Activated CD8-positive, alpha-beta T cell treated with anti-CD3 and anti-CD28 coated beads for 36 hours (primary cell): ENCODE measurements at regions of chr5 and their contacts with region 1.

Region 1: GRCh38 chr5:141412854-141413539 is at the start of gene PCDHGA10:
- DNase-seq: peak; percentile 75
- ATAC-seq: peak; percentile 78
- H3K4me3 Mint-ChIP-seq: peak within 1 kb of the TSS; percentile 73
- H3K27ac Mint-ChIP-seq: no peak within 1 kb of the TSS
- H3K4me1 Mint-ChIP-seq: peaks cover 13% of the 10 kb centered on the region
- H3K27me3 Mint-ChIP-seq: peaks cover 69% of the 10 kb centered on the region
- CTCF ChIP-seq: peak; percentile 79
- total RNA-seq, gene PCDHGA10: not detected

Region 2: DNA sequence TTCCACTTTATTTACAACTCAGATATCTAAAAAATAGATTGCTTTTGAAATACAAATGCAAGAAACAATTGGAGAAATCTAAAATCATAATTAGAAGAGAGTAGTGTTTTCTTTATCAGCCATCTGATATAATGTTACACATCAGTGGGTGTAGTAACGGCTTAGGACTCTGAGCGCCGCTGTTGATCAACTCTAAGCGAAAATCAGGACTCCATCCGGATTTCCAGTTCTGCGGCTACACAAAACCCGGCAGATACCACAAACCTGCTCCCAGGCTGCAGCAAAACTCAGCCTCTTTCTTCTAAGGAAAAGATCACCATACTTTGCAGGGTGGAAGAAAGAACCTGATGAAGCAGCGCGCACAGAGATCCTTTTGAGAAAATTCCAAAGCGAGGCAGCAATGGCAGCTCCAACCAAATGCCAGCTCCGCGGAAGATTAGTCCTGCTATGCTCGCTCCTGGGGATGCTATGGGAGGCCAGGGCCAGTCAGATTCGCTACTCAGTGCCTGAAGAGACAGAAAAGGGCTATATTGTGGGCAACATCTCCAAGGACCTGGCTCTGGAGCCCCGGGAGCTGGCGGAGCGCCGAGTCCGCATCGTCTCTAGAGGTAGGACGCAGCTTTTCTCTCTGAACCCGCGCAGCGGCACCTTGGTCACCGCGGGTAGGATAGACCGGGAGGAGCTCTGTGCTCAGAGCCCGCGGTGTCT is 10.3 kb before region 1 on chr5 and contains the start of gene PCDHGA9:
- CTCF ChIA-PET with region 1: interaction called, 19 read pairs
- POLR2A ChIA-PET with region 1: no interaction called
- intact Hi-C with region 1: no loop called
- DNase-seq: peak; percentile 42
- ATAC-seq: peak; percentile 42
- H3K4me3 Mint-ChIP-seq: no peak within 1 kb of the TSS
- H3K27ac Mint-ChIP-seq: no peak within 1 kb of the TSS
- H3K4me1 Mint-ChIP-seq: no peaks in the 10 kb centered on the region
- H3K27me3 Mint-ChIP-seq: peaks cover 62% of the 10 kb centered on the region
- CTCF ChIP-seq: peak; percentile 47
- total RNA-seq, gene PCDHGA9: 0.09 TPM in 1 of 2 experiments, not detected in the other

Region 3: DNA sequence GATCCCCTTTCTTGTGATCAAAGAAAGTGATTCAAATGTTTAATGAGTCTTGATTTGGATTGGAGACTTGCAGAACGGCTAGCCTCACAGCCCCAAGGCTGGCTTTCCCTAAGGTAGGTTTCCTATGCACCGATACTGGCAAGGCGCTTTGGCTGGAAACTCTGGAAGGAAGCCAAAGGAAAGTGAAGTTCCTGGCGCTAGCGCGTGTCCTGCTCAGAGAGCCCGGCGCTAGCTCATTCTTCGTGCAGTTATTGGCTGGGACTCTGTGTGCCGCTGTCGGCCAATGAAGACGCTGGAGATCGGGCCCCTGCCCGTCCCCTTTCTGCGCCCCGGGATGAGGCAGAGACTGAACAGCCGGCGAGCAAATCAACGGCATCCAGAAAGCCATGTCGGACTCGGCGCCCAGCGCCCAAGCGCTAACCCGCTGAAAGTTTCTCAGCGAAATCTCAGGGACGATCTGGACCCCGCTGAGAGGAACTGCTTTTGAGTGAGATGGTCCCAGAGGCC is 62.7 kb after region 1 on chr5 and contains the start of gene PCDHGC3:
- CTCF ChIA-PET with region 1: interaction called, 13 read pairs
- POLR2A ChIA-PET with region 1: no interaction called
- intact Hi-C with region 1: no loop called
- DNase-seq: peak; percentile 69
- ATAC-seq: peak; percentile 91
- H3K4me3 Mint-ChIP-seq: peak within 1 kb of the TSS; percentile 77
- H3K27ac Mint-ChIP-seq: no peak within 1 kb of the TSS
- H3K4me1 Mint-ChIP-seq: peaks cover 25% of the 10 kb centered on the region
- H3K27me3 Mint-ChIP-seq: peaks cover 52% of the 10 kb centered on the region
- CTCF ChIP-seq: peak; percentile 24
- total RNA-seq, gene PCDHGC3: not detected

Region 4: DNA sequence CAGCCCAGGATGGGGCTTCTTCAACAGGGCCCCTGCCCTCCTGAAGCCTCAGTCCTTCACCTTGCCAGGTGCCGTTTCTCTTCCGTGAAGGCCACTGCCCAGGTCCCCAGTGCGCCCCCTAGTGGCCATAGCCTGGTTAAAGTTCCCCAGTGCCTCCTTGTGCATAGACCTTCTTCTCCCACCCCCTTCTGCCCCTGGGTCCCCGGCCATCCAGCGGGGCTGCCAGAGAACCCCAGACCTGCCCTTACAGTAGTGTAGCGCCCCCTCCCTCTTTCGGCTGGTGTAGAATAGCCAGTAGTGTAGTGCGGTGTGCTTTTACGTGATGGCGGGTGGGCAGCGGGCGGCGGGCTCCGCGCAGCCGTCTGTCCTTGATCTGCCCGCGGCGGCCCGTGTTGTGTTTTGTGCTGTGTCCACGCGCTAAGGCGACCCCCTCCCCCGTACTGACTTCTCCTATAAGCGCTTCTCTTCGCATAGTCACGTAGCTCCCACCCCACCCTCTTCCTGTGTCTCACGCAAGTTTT is 99.5 kb after region 1 on chr5:
- CTCF ChIA-PET with region 1: interaction called, 71 read pairs
- POLR2A ChIA-PET with region 1: no interaction called
- intact Hi-C with region 1: loop called (anchors 5 kb)
- DNase-seq: peak; percentile 94
- ATAC-seq: peak; percentile 38
- H3K4me3 Mint-ChIP-seq: peak overlapping the region; percentile 70
- H3K27ac Mint-ChIP-seq: peak overlapping the region; percentile 84
- H3K4me1 Mint-ChIP-seq: peaks cover 43% of the 10 kb centered on the region
- H3K27me3 Mint-ChIP-seq: no peaks in the 10 kb centered on the region
- CTCF ChIP-seq: peak; percentile 87

Region 5: GRCh38 chr5:141557681-141558136 is 144.7 kb after region 1 on chr5:
- CTCF ChIA-PET with region 1: interaction called, 29 read pairs
- POLR2A ChIA-PET with region 1: no interaction called
- intact Hi-C with region 1: loop called (anchors 5 kb)
- DNase-seq: peak; percentile 87
- ATAC-seq: peak; percentile 81
- H3K4me3 Mint-ChIP-seq: no peak overlapping the region
- H3K27ac Mint-ChIP-seq: peak overlapping the region; percentile 18
- H3K4me1 Mint-ChIP-seq: peaks cover 20% of the 10 kb centered on the region
- H3K27me3 Mint-ChIP-seq: no peaks in the 10 kb centered on the region
- CTCF ChIP-seq: peak; percentile 94